ENCODE measurements at regions of chr5 and their contacts with region 1.

Region 1: DNA sequence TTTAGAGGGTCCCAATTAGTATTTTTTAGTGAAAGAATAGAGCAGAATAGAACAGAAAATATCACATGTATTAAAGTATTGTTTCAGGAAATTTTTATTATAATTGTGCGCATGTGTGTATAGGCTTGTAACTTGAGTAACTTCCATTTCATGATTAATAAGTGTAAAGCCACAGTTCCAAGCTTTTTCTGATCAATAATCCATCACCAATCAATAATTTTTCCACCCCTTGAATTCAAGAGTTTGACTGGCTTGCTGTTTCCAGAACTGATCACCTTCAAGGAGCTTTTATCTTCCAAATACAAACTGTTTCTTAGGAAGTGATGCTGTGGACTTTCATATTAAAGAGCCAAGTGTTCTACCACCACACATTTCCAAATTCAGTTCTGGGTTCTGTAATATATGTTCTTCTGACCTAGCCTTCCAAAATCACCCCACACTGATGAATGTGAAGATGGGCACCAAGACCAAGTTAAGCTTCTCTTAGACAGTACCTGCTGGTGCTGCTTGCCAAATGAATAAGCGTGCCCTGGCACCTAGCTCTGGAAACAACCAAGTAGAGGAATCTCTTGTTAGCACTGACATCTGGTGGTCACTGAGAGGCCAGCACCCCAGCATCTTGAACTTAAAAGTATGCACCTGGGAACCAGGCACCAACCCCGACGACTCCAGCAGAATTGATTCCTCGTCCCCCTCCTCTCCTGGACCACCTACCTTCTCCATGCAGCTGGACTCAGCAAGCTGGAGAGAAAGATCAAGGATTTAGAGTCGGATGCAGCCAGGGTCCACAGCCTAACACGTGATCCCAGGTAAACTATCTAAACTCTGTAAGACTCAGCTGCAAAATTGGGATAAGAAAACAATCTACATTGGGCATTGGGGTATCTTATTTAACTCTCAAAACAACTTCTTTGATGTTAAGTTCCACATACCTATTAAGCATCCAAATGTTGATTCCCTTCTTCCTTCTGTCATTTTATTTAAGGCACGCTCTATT is 89.6 kb downstream of the SLC1A3 start:
- DNase-seq: peak; percentile 56
- H3K4me3 Mint-ChIP-seq: no peak overlapping the region
- H3K27ac Mint-ChIP-seq: no peak overlapping the region
- H3K4me1 Mint-ChIP-seq: no peaks in the 10 kb centered on the region
- H3K27me3 Mint-ChIP-seq: peaks cover 22% of the 10 kb centered on the region

Region 2: DNA sequence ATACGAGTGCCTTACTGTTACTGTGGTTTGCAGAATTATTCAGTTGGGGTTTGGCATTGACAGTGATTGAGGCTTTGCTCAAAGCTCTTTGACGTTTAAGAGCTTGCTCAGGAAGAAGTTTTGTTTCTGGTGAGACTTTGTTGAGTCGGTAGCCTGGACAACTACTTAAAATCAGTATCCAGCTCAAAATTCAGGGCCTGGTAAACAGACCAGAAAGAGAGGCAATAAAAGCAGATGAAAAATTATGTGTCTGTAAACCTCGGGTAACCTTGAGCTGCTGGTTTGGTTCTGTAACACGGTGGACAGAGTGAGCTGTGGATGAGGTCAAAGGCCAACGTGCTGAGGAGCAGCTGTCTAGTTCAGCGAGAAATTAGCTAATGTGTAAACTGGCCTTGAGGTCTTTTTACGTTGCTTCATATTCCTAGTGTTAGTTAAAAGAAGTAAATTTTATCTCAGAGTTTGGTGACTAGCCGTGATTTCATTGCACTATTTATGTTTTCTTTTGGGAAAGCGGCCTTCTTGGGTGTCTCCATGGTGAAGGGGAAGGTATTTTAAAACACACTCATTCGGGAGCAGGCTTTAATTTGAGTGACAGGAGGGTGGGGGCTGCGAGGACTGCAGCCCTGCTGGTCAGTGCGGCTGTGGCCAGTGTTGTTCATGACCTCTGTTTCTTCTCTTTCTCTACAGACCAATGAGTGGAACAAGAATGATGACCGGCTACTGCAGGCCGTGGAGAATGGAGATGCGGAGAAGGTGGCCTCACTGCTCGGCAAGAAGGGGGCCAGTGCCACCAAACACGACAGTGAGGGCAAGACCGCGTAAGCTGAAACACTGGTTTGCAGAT is 1939.0 kb before region 1 on chr5:
- CTCF ChIA-PET with region 1: no interaction called
- POLR2A ChIA-PET with region 1: no interaction called
- intact Hi-C with region 1: no loop called
- DNase-seq: no peak
- H3K4me3 Mint-ChIP-seq: no peak overlapping the region
- H3K27ac Mint-ChIP-seq: no peak overlapping the region
- H3K4me1 Mint-ChIP-seq: no peaks in the 10 kb centered on the region
- H3K27me3 Mint-ChIP-seq: no peaks in the 10 kb centered on the region

Region 3: GRCh38 chr5:36507332-36507952 is 188.5 kb before region 1 on chr5:
- CTCF ChIA-PET with region 1: interaction called, 16 read pairs
- POLR2A ChIA-PET with region 1: no interaction called
- intact Hi-C with region 1: loop called (anchors 5 kb)
- DNase-seq: peak; percentile 78
- H3K4me3 Mint-ChIP-seq: no peak overlapping the region
- H3K27ac Mint-ChIP-seq: no peak overlapping the region
- H3K4me1 Mint-ChIP-seq: no peaks in the 10 kb centered on the region
- H3K27me3 Mint-ChIP-seq: no peaks in the 10 kb centered on the region

Region 4: DNA sequence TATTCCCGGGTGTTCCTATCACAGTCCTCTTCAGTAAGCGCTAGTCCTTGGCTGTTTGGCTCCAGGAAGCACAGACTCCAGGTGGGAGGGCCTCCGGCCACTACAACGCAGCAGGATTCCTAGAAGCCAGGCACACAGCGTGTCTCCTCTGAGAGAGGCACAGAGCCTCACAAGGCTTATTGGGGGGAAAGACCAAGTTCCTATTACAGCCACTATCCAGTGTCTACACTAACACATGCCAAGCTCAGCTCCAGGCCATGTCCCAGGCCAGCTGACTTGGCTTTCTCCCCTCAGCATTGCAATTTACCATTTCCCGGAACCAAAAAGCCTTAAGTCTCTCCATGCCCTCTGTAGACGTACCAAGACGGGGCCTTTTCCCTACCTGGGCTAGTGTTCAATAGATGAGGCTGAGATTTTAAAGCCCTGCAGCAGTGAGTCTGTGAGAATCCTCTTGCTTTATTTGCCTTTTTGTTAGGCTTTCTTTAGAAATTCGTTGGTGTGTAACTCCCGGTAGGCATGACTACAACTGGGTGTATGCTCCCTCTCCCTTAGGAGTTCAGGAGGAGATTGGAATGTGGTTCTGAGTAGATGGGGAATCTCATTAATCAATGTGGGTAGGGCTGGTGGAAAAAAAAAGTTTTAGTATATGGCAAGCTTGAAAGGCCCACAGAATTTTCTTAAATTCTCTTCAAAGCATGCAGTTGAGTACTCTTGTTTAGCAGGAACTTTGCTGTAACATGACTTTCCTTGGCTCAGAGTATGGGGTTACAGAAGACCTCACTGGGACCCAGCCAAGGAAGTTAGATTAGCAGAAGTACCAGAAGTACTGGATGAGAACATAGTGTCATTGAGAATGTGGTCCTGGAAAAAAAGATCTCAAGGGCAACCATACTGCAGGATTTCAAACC is 173.9 kb before region 1 on chr5:
- CTCF ChIA-PET with region 1: no interaction called
- POLR2A ChIA-PET with region 1: no interaction called
- intact Hi-C with region 1: no loop called
- DNase-seq: no peak
- H3K4me3 Mint-ChIP-seq: no peak overlapping the region
- H3K27ac Mint-ChIP-seq: no peak overlapping the region
- H3K4me1 Mint-ChIP-seq: no peaks in the 10 kb centered on the region
- H3K27me3 Mint-ChIP-seq: no peaks in the 10 kb centered on the region

Region 5: GRCh38 chr5:36614657-36615308 is 81.2 kb before region 1 on chr5:
- CTCF ChIA-PET with region 1: no interaction called
- POLR2A ChIA-PET with region 1: no interaction called
- intact Hi-C with region 1: no loop called
- DNase-seq: no peak
- H3K4me3 Mint-ChIP-seq: no peak overlapping the region
- H3K27ac Mint-ChIP-seq: no peak overlapping the region
- H3K4me1 Mint-ChIP-seq: no peaks in the 10 kb centered on the region
- H3K27me3 Mint-ChIP-seq: peaks cover 13% of the 10 kb centered on the region

Region 6: DNA sequence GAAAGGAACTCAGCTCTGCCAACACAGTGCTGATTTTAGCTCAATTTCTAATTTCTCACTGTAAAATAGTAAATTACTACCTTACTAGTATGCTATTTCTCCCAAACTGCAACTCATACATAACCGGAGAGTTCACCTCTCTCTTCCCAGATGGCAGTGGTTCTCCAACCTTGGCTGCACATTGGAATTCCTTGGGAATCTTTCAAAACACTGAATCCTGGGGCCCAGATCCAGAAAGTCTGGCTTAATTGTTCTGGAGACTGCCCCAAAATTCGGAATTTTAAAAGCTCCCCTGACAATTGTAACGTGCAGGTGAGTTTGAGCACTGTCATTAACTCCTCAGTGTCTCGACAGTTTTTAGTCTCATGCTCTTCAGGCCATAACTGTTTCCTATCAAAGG is 10.7 kb after region 1 on chr5:
- CTCF ChIA-PET with region 1: interaction called, 15 read pairs
- POLR2A ChIA-PET with region 1: no interaction called
- intact Hi-C with region 1: no loop called
- DNase-seq: no peak
- H3K4me3 Mint-ChIP-seq: no peak overlapping the region
- H3K27ac Mint-ChIP-seq: no peak overlapping the region
- H3K4me1 Mint-ChIP-seq: no peaks in the 10 kb centered on the region
- H3K27me3 Mint-ChIP-seq: peaks cover 6% of the 10 kb centered on the region

Region 7: GRCh38 chr5:37495210-37495609 is 799.2 kb after region 1 on chr5:
- CTCF ChIA-PET with region 1: no interaction called
- POLR2A ChIA-PET with region 1: no interaction called
- intact Hi-C with region 1: no loop called
- DNase-seq: no peak
- H3K4me3 Mint-ChIP-seq: no peak overlapping the region
- H3K27ac Mint-ChIP-seq: no peak overlapping the region
- H3K4me1 Mint-ChIP-seq: peaks cover 9% of the 10 kb centered on the region
- H3K27me3 Mint-ChIP-seq: no peaks in the 10 kb centered on the region